H1 (cell line): ENCODE measurements at regions of chrX and their contacts with region 1.

Region 1: DNA sequence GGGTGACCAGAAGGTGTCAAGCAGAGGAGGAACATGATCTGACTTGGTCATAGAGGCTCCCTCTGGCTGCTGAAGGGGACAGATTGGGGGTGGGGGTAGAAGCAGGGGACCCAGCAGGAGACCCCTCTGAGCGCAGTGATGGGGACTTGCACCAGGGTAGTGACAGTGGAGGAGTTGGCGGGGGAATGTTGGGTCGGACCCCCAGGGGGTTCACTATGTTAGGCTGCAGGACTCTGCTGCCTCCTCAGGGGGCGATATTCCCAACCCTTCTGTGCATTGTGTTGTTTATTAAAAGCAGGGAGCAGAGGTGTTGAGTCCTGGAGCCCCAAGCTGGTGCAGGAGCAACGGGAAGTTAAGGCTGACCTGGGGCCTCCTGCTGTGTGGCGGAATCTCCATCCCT is 8.8 kb downstream of the WDR13 start:
- DNase-seq: peak in 1 of 2 experiments; percentile 44
- H3K4me3 ChIP-seq: no peak overlapping the region
- H3K27ac ChIP-seq: no peak overlapping the region
- H3K4me1 ChIP-seq: peaks cover 0 to 6% (median 2%) of the 10 kb centered on the region in 4 experiments; a peak in 3 of 7 replicates
- H3K27me3 ChIP-seq: no peaks in the 10 kb centered on the region
- CTCF ChIP-seq: peak in 2 of 3 experiments; percentile 15 to 40; a peak in 2 of 4 replicates
- EP300 ChIP-seq: no peak
- POLR2A ChIP-seq: no peak
- RAD21 ChIP-seq: 0 out of 4 replicates have a peak, but pooled peaks of 1 of the 2 experiments have one; percentile 17

Region 2: GRCh38 chrX:48508400-48509244 is 97.5 kb before region 1 on chrX and contains the start of gene PORCN:
- CTCF ChIA-PET with region 1: no interaction called
- POLR2A ChIA-PET with region 1: no interaction called
- DNase-seq: peak in 1 of 2 experiments; percentile 79
- H3K4me3 ChIP-seq: peak within 1 kb of the TSS; percentile 60 to 93 (median 72)
- H3K27ac ChIP-seq: no peak within 1 kb of the TSS
- H3K4me1 ChIP-seq: peaks cover 0 to 5% (median 2%) of the 10 kb centered on the region in 4 experiments; a peak in 4 of 7 replicates
- H3K27me3 ChIP-seq: no peaks in the 10 kb centered on the region; a peak in 2 of 7 replicates
- CTCF ChIP-seq: no peak
- EP300 ChIP-seq: no peak
- POLR2A ChIP-seq: peak in 1 of 2 experiments; percentile 56; a peak in 2 of 3 replicates
- RAD21 ChIP-seq: no peak
- total RNA-seq, gene PORCN: 14.0 and 14.6 TPM in 2 replicates

Region 3: GRCh38 chrX:48617542-48618340 is 11.7 kb after region 1 on chrX:
- CTCF ChIA-PET with region 1: interaction called, 4 read pairs
- POLR2A ChIA-PET with region 1: interaction called, 12 read pairs
- DNase-seq: no peak
- H3K4me3 ChIP-seq: no peak overlapping the region
- H3K27ac ChIP-seq: no peak overlapping the region
- H3K4me1 ChIP-seq: no peaks in the 10 kb centered on the region; a peak in 1 of 7 replicates
- H3K27me3 ChIP-seq: no peaks in the 10 kb centered on the region
- CTCF ChIP-seq: no peak
- EP300 ChIP-seq: no peak
- POLR2A ChIP-seq: no peak
- RAD21 ChIP-seq: no peak

Region 4: GRCh38 chrX:48726596-48726995 is 120.5 kb after region 1 on chrX:
- CTCF ChIA-PET with region 1: no interaction called
- POLR2A ChIA-PET with region 1: no interaction called
- DNase-seq: no peak
- H3K4me3 ChIP-seq: no peak overlapping the region
- H3K27ac ChIP-seq: no peak overlapping the region
- H3K4me1 ChIP-seq: no peaks in the 10 kb centered on the region
- H3K27me3 ChIP-seq: no peaks in the 10 kb centered on the region; a peak in 1 of 7 replicates
- CTCF ChIP-seq: no peak
- EP300 ChIP-seq: no peak
- POLR2A ChIP-seq: no peak
- RAD21 ChIP-seq: no peak